ENCODE measurements at regions of chr6 and their contacts with region 1.

Region 1: DNA sequence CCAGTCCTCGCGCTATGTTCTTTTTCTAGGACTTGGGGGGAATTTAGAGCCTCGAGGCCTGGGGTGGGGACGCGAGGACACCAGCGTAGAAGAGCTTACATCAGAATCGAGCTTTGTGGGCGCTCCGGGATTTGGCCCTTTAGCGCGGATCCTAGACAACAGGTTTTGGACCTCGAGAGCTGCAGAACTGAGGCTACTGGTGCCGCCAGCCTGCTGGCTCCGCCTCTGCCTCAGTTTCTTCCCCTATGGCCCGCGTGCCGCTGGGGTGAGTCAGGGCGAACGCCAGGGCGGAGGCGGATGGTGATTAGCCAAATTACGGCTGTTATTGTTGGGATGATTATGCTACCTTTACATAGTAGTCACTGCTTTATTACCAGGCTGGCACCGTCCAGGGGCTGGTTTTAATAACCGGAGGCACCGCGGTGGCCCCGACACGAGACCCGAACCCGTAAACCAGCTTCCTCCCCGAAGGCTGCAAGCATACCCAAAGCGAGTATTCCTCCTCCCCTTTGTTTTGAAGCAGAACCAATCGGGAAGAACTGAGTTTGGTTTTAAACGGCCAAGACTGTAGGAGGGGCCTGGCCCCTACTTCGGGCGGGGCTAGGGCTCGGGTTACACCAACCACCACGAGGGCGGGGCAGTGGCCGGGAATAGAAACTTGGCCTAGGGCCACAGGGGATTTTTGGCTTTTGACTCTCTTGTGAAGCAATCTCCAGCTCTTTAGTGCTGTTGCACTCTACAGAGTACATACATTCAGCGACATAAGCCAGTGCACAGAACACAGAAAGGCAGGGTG is 639 bp upstream of the GTPBP2 start:
- DNase-seq: peak; percentile 98
- H3K4me3 ChIP-seq: peak overlapping the region; percentile 82 to 96 (median 88)
- H3K27ac ChIP-seq: peak overlapping the region; percentile 96 to 100 (median 98)
- H3K4me1 ChIP-seq: peaks cover 0 to 26% (median 23%) of the 10 kb centered on the region in 4 donors
- H3K27me3 ChIP-seq: no peaks in the 10 kb centered on the region
- CTCF ChIP-seq: no peak
- EP300 ChIP-seq: peak in 2 of 4 donors; percentile 26 to 31
- POLR2A ChIP-seq: peak; percentile 75 to 80

Region 2: DNA sequence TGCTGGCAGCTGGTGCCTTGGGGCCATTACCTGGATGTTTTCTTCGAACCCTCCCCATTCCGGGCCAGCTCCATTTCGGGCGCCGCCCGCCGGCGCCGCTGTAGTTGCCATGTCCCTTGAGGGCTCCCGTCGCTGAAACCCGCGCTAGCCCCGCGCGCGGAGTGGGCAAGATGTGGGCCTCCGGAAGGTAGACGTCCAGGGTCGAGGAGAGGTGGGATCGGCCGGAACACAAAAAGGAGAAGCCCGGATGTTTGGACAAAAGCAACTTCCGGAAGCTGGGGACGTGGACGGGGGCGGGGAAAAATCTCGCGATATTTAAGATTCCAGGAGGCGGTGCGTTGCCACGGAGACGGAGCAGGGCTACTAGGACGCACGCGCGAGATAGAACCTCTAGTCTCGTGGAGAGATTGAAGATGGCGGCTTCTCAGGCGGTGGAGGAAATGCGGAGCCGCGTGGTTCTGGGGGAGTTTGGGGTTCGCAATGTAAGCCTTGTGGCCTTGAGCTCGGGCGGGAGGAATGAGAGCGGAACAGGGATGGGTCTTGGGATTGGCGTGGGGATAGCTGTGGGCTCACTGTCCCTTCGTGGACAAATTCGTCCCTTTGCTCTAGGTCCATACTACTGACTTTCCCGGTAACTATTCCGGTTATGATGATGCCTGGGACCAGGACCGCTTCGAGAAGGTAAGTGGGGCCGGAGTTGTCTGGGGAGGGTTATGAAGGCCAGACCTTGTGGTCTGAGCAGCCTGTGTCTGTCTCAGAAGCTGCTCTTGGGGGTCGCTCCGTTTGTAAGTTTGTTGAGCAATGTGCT is 112.8 kb before region 1 on chr6 and contains the starts of genes POLR1C and YIPF3:
- intact Hi-C with region 1: loop called (anchors 2 kb)
- DNase-seq: peak; percentile 99
- H3K4me3 ChIP-seq: peak within 1 kb of the TSS; percentile 73 to 94 (median 79)
- H3K27ac ChIP-seq: peak within 1 kb of the TSS; percentile 84 to 91 (median 85)
- H3K4me1 ChIP-seq: peaks cover 0 to 41% (median 35%) of the 10 kb centered on the region in 4 donors
- H3K27me3 ChIP-seq: no peaks in the 10 kb centered on the region
- CTCF ChIP-seq: no peak
- EP300 ChIP-seq: no peak
- POLR2A ChIP-seq: peak in 1 of 2 donors; percentile 45
- total RNA-seq, gene POLR1C: 11.9 to 25.5 (median 19.1) TPM
- total RNA-seq, gene YIPF3: 58.4 to 74.2 (median 66.0) TPM

Region 3: DNA sequence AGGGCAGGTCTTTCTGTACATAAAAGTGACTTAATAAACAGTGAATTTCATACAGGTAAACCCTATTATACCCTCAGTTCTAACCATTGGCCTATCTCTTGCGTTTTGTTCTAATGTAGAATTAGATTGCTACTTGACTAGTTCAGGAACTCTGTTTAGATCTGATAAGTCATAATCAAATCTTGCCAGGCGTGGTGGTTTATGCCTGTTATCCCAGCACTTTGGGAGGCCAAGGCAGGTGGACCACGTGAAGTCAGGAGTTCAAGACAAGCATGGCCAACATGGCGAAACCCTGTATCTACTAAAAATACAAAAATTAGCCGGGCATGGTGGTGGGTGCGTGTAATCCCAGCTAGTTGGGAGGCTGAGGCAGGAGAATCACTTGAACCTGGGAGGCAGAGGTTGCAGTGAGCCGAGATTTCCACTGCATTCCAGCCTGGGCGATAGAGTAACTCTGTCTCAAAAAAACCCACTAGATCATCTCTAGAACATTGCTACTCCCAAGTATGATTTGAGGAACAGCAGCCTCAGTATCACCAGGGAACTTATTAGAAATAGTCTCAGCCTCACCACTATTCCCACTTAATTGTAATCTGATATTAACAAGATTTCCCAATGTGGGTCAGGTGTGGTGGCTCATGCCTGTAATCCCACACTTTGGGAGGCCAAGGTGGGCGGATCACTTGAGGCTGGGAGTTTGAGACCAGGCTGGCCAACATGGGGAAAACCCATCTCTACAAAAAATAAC is 12.8 kb before region 1 on chr6:
- intact Hi-C with region 1: no loop called
- DNase-seq: no peak
- H3K4me3 ChIP-seq: no peak overlapping the region
- H3K27ac ChIP-seq: no peak overlapping the region
- H3K4me1 ChIP-seq: no peaks in the 10 kb centered on the region
- H3K27me3 ChIP-seq: no peaks in the 10 kb centered on the region
- CTCF ChIP-seq: no peak
- EP300 ChIP-seq: no peak
- POLR2A ChIP-seq: no peak

Region 4: GRCh38 chr6:43702534-43703440 is 73.1 kb after region 1 on chr6:
- intact Hi-C with region 1: loop called (anchors 5 kb)
- DNase-seq: peak; percentile 96
- H3K4me3 ChIP-seq: no peak overlapping the region
- H3K27ac ChIP-seq: peak overlapping the region; percentile 70 to 84 (median 78)
- H3K4me1 ChIP-seq: peaks cover 0 to 30% (median 25%) of the 10 kb centered on the region in 4 donors
- H3K27me3 ChIP-seq: no peaks in the 10 kb centered on the region
- CTCF ChIP-seq: no peak
- EP300 ChIP-seq: peak in 2 of 4 donors; percentile 20 to 33
- POLR2A ChIP-seq: peak in 1 of 2 donors; percentile 66